PC-3 (cell line): ENCODE measurements at regions of chr2 and their contacts with region 1.

Region 1: GRCh38 chr2:31090188-31090587 is 48.1 kb downstream of the GALNT14 start:
- DNase-seq: no peak
- ATAC-seq: no peak
- H3K4me3 ChIP-seq: no peak overlapping the region
- H3K27ac ChIP-seq: no peak overlapping the region
- H3K4me1 ChIP-seq: peaks cover 6% of the 10 kb centered on the region; the same call in 1 of the 2 replicates
- H3K27me3 ChIP-seq: no peaks in the 10 kb centered on the region; the same call in 1 of the 2 replicates
- CTCF ChIP-seq: no peak

Region 2: DNA sequence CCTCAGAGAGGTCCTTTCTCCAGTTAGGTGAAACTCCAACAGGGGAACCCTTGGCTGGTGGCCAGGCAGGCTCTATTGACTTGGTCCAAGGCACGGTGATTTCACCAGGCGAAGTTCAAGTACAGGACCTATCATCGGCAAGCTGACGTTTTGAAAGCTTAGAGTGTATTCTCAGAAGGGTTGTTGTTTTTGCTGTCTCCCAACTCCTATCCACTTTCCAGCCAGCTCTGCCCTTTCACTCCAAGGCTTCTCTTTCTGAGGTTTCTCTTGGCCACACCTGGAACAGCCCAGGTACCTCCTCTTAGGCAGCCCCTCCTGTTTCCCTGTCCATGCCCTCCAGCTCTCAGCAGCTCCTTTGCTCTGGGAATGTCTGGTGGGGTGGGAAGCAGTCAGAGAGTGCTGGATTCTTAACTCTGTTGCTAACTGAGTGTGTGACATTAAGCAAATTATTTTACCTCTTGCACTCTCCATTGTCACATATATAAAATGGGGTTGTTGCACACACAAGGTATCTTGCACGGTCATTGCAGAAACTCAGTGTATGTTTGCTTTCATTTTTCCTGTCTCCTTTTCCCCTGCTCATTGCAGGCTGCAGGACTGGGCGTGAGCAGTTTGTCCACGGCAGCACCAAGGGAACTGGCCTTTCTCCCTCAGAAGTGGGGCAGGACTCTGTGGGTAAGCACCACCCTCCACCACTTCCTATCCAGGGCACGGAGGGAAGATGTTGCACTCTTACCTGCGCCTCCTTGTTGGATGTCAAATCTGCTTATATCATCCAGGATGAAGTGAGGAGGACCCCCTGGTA is 313.2 kb before region 1 on chr2:
- CTCF ChIA-PET with region 1: no interaction called
- POLR2A ChIA-PET with region 1: no interaction called
- intact Hi-C with region 1: no loop called
- DNase-seq: no peak
- ATAC-seq: no peak
- H3K4me3 ChIP-seq: no peak overlapping the region
- H3K27ac ChIP-seq: no peak overlapping the region
- H3K4me1 ChIP-seq: no peaks in the 10 kb centered on the region
- H3K27me3 ChIP-seq: peaks cover 36% of the 10 kb centered on the region
- CTCF ChIP-seq: no peak

Region 3: DNA sequence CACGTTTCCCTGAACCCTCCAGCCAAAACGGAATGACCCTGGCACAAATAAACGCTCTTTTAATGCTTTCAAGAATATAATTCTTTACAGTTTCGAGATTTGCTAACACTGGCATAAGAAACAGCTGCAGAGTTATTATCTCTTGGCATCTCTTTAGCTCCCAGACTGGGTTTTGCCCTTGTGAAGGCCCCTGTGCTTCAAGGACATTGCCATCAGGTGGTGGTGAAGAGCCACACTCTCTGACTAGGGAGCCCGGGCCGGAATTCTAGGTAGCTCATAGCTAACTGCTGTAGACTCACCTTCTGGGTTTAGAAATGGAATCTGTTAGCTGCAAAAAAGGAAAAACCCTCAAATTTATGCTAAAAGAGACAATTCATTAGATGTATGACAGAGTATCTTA is 61.3 kb after region 1 on chr2:
- CTCF ChIA-PET with region 1: no interaction called
- POLR2A ChIA-PET with region 1: no interaction called
- intact Hi-C with region 1: no loop called
- DNase-seq: peak; percentile 30
- ATAC-seq: peak; percentile 67
- H3K4me3 ChIP-seq: no peak overlapping the region
- H3K27ac ChIP-seq: no peak overlapping the region
- H3K4me1 ChIP-seq: no peaks in the 10 kb centered on the region
- H3K27me3 ChIP-seq: peaks cover 27% of the 10 kb centered on the region; the same call in 1 of the 2 replicates
- CTCF ChIP-seq: peak; percentile 53

Region 4: DNA sequence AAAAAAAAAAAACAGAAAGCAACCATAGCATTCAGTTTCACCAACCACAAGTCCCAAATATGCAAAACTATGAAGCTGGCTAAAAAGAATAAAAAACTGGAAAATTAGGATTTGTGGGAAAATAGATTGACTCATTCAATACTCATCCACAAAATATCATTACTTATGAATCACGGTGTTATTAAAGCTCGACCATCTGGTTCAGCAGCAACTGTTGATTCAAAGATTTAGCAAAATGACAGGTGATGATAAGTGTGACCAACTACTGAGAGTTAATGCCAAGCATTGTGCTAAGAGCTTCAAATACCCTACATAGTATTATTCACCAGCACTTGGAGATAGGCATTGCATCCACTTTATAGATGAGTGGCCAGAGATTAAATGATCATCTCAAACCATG is 350.6 kb after region 1 on chr2:
- CTCF ChIA-PET with region 1: no interaction called
- POLR2A ChIA-PET with region 1: interaction called, 27 read pairs
- intact Hi-C with region 1: no loop called
- DNase-seq: peak; percentile 93
- ATAC-seq: peak; percentile 92
- H3K4me3 ChIP-seq: no peak overlapping the region
- H3K27ac ChIP-seq: peak overlapping the region; percentile 40
- H3K4me1 ChIP-seq: peaks cover 13% of the 10 kb centered on the region
- H3K27me3 ChIP-seq: no peaks in the 10 kb centered on the region
- CTCF ChIP-seq: no peak